Sigmoid colon (tissue), 7 donors: ENCODE measurements at regions of chr1 and their contacts with region 1.

Region 1: GRCh38 chr1:2270260-2271100 is 42.4 kb downstream of the SKI start:
- DNase-seq: peak; percentile 77
- H3K4me3 ChIP-seq: peak overlapping the region in 1 of 4 donors; percentile 6
- H3K27ac ChIP-seq: peak overlapping the region; percentile 69 to 81 (median 75)
- H3K4me1 ChIP-seq: peaks cover 0 to 100% (median 99%) of the 10 kb centered on the region in 4 donors
- H3K27me3 ChIP-seq: no peaks in the 10 kb centered on the region
- CTCF ChIP-seq: no peak
- EP300 ChIP-seq: no peak
- POLR2A ChIP-seq: no peak

Region 2: DNA sequence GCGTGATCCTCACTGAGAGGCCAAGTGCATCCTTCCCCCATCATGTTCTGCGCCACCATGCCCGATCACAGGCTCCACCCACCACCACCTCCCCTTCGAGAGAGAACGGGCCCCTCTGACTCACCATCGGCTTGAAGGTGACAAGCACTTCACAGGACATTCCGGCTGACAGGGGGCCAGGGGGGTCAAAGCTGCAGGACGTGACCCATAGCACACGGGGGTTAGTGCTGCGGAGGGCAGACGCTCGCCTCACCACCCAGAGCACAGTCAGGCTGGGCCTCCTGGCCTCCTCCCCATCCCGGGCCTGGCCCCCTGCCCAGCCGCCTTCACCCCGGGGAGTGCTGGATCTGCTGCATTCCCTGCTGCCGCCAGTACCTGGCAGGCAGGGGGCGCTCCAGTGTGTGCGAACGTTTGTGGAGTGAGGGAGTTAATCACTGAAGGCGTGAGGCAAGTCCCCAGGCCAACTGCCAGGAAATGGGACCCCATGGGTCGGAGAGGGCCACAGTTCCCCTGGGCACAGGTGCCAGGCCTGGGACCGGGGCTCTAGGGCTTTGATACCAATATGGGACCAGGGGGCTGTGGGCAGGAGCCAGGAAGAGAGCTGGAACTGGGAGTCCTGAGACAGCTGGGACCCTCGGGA is 310.5 kb before region 1 on chr1:
- intact Hi-C with region 1: no loop called
- DNase-seq: peak; percentile 86
- H3K4me3 ChIP-seq: no peak overlapping the region
- H3K27ac ChIP-seq: no peak overlapping the region
- H3K4me1 ChIP-seq: peaks cover 0 to 9% (median 7%) of the 10 kb centered on the region in 4 donors
- H3K27me3 ChIP-seq: peaks cover 6 to 75% (median 40%) of the 10 kb centered on the region in 3 donors
- CTCF ChIP-seq: peak; percentile 13 to 58 (median 55)
- EP300 ChIP-seq: no peak
- POLR2A ChIP-seq: no peak

Region 3: DNA sequence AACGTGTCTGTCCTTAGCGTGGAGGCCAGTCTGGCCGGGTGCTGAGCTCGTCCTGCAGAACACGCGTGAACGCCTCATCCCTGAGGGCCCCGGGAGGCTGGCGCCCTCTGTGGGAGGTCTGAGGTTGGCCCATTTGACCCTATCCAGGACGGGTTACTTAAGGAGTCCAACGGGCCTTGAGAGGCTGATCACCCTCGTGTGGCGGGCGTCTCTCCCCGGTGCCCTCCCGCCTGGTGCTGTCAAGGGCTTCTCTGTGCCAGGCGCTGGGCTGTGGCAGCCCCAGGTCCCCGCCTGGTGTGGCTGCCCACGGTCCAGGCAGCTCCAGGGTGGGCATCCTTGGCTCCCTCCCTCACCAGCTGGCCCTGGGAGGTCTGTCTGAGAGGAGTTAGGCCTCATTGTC is 32.7 kb before region 1 on chr1:
- intact Hi-C with region 1: loop called (anchors 5 kb)
- DNase-seq: no peak
- H3K4me3 ChIP-seq: peak overlapping the region in 2 of 4 donors; percentile 5 to 7
- H3K27ac ChIP-seq: peak overlapping the region; percentile 67 to 92 (median 90)
- H3K4me1 ChIP-seq: peaks cover 0 to 100% (median 99%) of the 10 kb centered on the region in 4 donors
- H3K27me3 ChIP-seq: no peaks in the 10 kb centered on the region
- CTCF ChIP-seq: no peak
- EP300 ChIP-seq: no peak
- POLR2A ChIP-seq: no peak